ENCODE measurements at regions of chr16 and their contacts with region 1.

Region 1: DNA sequence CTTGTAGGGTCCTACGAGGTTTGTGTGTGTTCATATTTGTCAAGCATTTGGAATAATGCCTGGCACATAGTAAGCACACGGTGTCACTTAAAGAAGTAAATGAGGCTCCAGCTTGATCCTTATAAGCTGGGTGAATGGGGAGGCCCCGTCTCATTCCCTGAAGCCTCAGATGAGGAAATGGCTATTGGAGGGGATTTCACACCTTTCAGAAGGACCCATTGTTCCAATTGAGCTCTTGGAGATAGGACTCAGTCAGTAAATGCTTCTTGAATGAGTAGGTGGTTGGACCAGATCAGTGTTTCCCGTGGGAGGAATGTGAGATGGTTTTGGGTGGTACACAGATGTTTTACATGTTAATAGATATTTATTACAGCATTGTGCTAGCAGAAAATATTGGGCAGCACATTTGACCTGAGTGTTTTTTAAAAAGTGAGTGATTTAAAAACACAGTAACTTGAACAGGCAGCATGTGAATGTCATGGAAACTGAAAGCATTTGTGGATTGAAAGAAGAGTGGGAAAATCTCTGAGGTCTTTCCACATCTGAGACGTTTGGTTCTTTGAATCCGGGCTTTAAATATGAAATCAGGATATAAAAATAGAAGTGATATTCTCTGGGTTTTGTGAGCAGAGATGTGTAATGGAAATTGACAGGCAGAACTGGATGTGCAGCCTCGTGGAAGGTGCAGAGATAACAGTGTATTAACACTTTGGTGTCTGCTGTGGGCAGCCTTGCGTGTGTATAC is 36.4 kb upstream of the ARHGAP17 start:
- DNase-seq: no peak
- H3K4me3 ChIP-seq: no peak overlapping the region
- H3K27ac ChIP-seq: peak overlapping the region; percentile 22
- H3K27me3 ChIP-seq: no peaks in the 10 kb centered on the region
- CTCF ChIP-seq: no peak

Region 2: GRCh38 chr16:24883714-24884151 is 167.8 kb before region 1 on chr16:
- CTCF ChIA-PET with region 1: no interaction called
- POLR2A ChIA-PET with region 1: no interaction called
- DNase-seq: no peak
- H3K4me3 ChIP-seq: no peak overlapping the region
- H3K27ac ChIP-seq: no peak overlapping the region
- H3K27me3 ChIP-seq: peaks cover 5% of the 10 kb centered on the region
- CTCF ChIP-seq: no peak

Region 3: GRCh38 chr16:25014500-25015147 is 37.0 kb before region 1 on chr16:
- CTCF ChIA-PET with region 1: interaction called, 3 read pairs
- POLR2A ChIA-PET with region 1: interaction called, 10 read pairs
- DNase-seq: no peak
- H3K4me3 ChIP-seq: peak overlapping the region; percentile 89
- H3K27ac ChIP-seq: peak overlapping the region; percentile 70
- H3K27me3 ChIP-seq: no peaks in the 10 kb centered on the region
- CTCF ChIP-seq: no peak

Region 4: GRCh38 chr16:25135254-25135878 is 83.8 kb after region 1 on chr16:
- CTCF ChIA-PET with region 1: interaction called, 18 read pairs
- POLR2A ChIA-PET with region 1: no interaction called
- DNase-seq: peak; percentile 63
- H3K4me3 ChIP-seq: no peak overlapping the region
- H3K27ac ChIP-seq: peak overlapping the region; percentile 42
- H3K27me3 ChIP-seq: no peaks in the 10 kb centered on the region
- CTCF ChIP-seq: peak; percentile 67